ENCODE measurements at regions of chr3 and their contacts with region 1.

Region 1: GRCh38 chr3:128763967-128764366 is 38.0 kb downstream of the RAB7A start:
- DNase-seq: peak; percentile 34 to 71
- ATAC-seq: peak; percentile 79 to 88 (median 82)
- H3K4me3 ChIP-seq: no peak overlapping the region
- H3K27ac ChIP-seq: peak overlapping the region; percentile 79
- H3K4me1 ChIP-seq: peaks cover 69% of the 10 kb centered on the region
- H3K27me3 ChIP-seq: no peaks in the 10 kb centered on the region
- CTCF ChIP-seq: no peak

Region 2: GRCh38 chr3:128736601-128737000 is 27.4 kb before region 1 on chr3:
- intact Hi-C with region 1: loop called (anchors 2 to 5 kb)
- DNase-seq: no peak
- ATAC-seq: no peak
- H3K4me3 ChIP-seq: no peak overlapping the region
- H3K27ac ChIP-seq: no peak overlapping the region
- H3K4me1 ChIP-seq: peaks cover 64% of the 10 kb centered on the region
- H3K27me3 ChIP-seq: no peaks in the 10 kb centered on the region
- CTCF ChIP-seq: no peak

Region 3: DNA sequence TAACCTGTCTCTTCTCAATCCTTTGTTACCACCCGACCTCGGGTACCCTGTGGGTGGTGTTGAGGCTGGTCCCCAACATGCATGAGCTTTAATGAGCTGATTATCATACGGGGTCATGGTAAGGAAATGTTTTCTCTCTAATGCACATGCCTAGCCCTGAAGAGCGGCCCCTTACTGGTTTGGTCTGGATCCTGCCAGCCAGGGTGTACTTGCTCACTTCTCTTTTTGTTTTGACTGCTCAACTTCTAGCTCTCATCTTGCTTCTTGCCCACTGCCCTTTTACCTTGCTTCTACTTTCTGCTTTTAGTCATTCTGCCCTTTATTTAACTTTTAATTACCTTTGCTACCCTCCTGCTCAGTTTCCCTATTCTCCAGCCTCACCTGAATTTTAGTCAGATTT is 71.1 kb after region 1 on chr3:
- intact Hi-C with region 1: no loop called
- DNase-seq: no peak
- ATAC-seq: no peak
- H3K4me3 ChIP-seq: no peak overlapping the region
- H3K27ac ChIP-seq: no peak overlapping the region
- H3K4me1 ChIP-seq: no peaks in the 10 kb centered on the region
- H3K27me3 ChIP-seq: no peaks in the 10 kb centered on the region
- CTCF ChIP-seq: no peak